ENCODE measurements at regions of chr3 and their contacts with region 1.

Region 1: DNA sequence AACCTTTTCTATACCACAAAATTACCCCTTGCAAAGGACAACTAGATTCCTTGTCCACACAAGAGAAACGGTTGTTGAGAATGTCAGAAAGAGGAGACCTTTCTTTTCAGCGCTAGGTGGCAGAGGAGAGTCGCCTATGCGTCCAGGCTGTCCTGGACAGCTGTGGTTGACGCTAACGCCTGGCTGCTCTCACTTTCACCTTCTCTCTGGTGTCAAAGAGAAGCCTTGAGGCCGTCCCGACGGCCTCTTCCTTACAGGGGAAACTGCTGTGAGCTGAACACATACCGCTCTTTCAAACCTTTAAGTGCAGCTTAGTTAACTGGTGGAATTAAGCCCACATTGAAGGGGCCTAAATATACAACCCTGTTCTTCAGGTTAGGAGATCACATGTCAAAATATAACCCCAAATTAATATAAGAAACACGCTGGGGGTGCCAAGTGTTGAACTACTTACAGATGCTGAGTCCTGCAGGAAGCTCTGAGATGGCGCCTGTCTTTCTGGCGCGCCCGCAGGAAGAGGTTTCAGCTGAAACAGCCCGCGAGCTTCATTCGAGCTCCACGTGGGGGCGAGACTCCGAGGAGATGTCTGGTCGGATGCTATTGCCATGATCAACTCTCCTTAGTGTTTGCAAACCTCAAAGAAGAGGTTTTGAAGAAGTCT is 26.1 kb upstream of the KBTBD8 start:
- DNase-seq: peak; percentile 52
- ATAC-seq: peak; percentile 93
- H3K4me3 ChIP-seq: no peak overlapping the region
- H3K27ac ChIP-seq: no peak overlapping the region
- H3K4me1 ChIP-seq: no peaks in the 10 kb centered on the region
- H3K27me3 ChIP-seq: peaks cover 18% of the 10 kb centered on the region; the same call in 1 of the 2 replicates
- CTCF ChIP-seq: peak; percentile 62

Region 2: GRCh38 chr3:67037615-67038014 is 65.6 kb after region 1 on chr3:
- CTCF ChIA-PET with region 1: no interaction called
- POLR2A ChIA-PET with region 1: no interaction called
- intact Hi-C with region 1: loop called (anchors 1 kb)
- DNase-seq: no peak
- ATAC-seq: no peak; the same call in 1 of the 2 replicates
- H3K4me3 ChIP-seq: no peak overlapping the region
- H3K27ac ChIP-seq: no peak overlapping the region
- H3K4me1 ChIP-seq: no peaks in the 10 kb centered on the region
- H3K27me3 ChIP-seq: no peaks in the 10 kb centered on the region
- CTCF ChIP-seq: no peak

Region 3: GRCh38 chr3:68876112-68876713 is 1904.2 kb after region 1 on chr3:
- CTCF ChIA-PET with region 1: no interaction called
- POLR2A ChIA-PET with region 1: no interaction called
- intact Hi-C with region 1: loop called (anchors 5 kb)
- DNase-seq: peak; percentile 66
- ATAC-seq: peak; percentile 66
- H3K4me3 ChIP-seq: no peak overlapping the region
- H3K27ac ChIP-seq: no peak overlapping the region
- H3K4me1 ChIP-seq: no peaks in the 10 kb centered on the region
- H3K27me3 ChIP-seq: peaks cover 8% of the 10 kb centered on the region; the same call in 1 of the 2 replicates
- CTCF ChIP-seq: peak; percentile 66

Measured in PC-3 (cell line).